IMR-90 (cell line): ENCODE measurements at regions of chr5 and their contacts with region 1.

Region 1: GRCh38 chr5:16992006-16992405 is 55.9 kb upstream of the MYO10 start:
- DNase-seq: peak; percentile 71
- ATAC-seq: peak; percentile 67
- H3K4me3 ChIP-seq: no peak overlapping the region
- H3K27ac ChIP-seq: no peak overlapping the region
- H3K4me1 ChIP-seq: peaks cover 13% of the 10 kb centered on the region
- H3K27me3 ChIP-seq: no peaks in the 10 kb centered on the region
- CTCF ChIP-seq: no peak
- POLR2A ChIP-seq: no peak
- RAD21 ChIP-seq: no peak

Region 2: DNA sequence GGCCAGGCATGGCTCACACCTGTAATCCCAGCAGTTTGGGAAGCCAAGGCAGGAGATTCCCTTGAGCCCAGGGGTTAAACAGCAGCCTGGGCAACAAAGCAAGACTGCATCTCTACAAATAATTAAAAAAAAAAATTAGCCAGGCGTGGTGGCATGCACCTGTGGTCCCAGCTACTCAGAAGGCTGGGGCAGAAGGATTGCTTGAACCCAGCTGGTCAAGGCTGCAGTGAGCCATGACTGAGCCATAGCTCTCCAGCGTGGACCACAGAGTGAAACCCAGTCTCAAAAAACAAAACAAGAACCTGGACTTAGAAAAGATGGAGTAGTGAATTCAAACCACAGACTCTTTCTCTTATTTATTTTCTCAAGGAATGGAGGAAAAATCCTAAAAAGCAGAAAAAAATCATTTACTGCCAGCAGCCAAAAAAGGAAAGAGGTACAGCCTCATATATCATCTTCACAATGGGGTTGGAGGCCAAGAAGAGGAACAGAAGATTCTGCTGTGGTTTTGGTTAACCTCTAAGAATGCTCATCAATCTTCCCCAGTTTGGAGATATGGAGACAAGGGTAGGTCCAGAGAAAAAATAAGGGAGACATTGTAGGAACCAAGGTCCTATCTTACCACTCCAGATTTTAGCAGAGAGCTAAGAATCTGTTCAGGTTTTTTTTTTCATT is 15.9 kb before region 1 on chr5:
- CTCF ChIA-PET with region 1: interaction called, 10 read pairs
- POLR2A ChIA-PET with region 1: no interaction called
- dilution Hi-C with region 1: no loop called
- in situ Hi-C with region 1: no loop called
- intact Hi-C with region 1: no loop called
- DNase-seq: no peak
- ATAC-seq: no peak
- H3K4me3 ChIP-seq: no peak overlapping the region
- H3K27ac ChIP-seq: no peak overlapping the region
- H3K4me1 ChIP-seq: no peaks in the 10 kb centered on the region
- H3K27me3 ChIP-seq: no peaks in the 10 kb centered on the region
- CTCF ChIP-seq: no peak
- POLR2A ChIP-seq: no peak
- RAD21 ChIP-seq: no peak